H1 (cell line): ENCODE measurements at regions of chr4 and their contacts with region 1.

Region 1: DNA sequence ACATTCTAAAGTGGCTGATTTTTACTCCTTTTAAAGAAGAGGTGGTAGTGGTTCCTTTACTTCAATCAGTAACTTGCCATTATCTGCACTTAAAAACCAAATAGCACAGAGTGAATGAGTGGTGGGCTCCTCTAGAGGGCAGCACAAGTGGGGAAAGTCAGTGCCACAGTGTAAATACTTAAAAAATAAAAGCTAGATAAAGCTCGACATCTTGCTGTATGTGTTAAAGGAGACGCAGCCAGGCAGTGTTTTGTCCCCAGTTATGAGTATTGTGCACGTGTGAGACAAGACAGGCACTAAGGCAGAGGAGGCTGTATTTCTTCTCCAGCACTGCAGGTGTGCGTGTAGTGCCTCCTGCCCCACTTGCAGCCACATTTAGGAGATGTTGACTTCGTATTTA is 24.6 kb downstream of the NAP1L5 start:
- DNase-seq: peak; percentile 23 to 55
- H3K4me3 ChIP-seq: no peak overlapping the region
- H3K27ac ChIP-seq: no peak overlapping the region
- H3K4me1 ChIP-seq: no peaks in the 10 kb centered on the region
- H3K27me3 ChIP-seq: peaks cover 0 to 1% (median 0%) of the 10 kb centered on the region in 4 experiments; a peak in 1 of 7 replicates
- CTCF ChIP-seq: peak in 2 of 3 experiments; percentile 65 to 77; a peak in 3 of 4 replicates
- EP300 ChIP-seq: no peak
- POLR2A ChIP-seq: no peak
- RAD21 ChIP-seq: peak; percentile 57 to 73

Region 2: DNA sequence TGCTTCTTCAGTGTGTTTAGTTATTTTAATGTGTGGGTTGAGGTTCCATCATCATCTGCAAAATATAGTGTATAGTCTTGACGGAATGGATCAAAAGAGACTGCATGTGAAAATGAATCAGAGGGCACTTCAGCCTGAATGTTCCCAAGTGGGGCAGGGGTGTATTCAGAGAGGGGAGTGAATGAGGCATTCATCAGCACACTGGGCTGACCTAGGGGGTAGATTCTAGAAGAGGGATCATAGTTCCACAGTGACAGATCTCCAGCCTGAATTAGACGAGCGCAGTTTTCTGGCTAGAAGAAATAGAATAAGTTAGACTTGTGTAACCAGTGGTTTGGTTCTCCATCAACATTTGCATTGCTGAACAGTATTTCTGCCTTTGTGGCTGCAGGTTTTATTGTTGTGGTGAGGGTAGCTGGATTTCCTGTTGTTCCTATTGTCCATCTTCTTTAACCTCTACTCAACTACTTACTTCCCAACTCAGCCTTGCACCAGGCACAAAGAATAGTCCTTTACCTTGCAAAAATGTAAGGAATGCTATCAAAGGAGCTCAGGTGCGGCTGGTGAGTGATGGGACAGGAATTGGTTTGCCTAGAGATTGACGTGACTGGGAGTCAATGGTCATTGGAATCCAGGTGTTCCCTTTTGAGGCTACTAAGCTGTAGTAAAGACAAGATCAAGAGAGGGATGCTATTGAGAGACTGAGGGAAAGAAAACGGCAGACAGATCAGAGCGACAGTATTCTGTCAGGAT is 26.3 kb before region 1 on chr4:
- CTCF ChIA-PET with region 1: no interaction called
- POLR2A ChIA-PET with region 1: no interaction called
- DNase-seq: peak; percentile 51 to 57
- H3K4me3 ChIP-seq: no peak overlapping the region; a peak in 2 of 8 replicates
- H3K27ac ChIP-seq: no peak overlapping the region; the same call in 1 of the 2 replicates
- H3K4me1 ChIP-seq: peaks cover 7 to 11% (median 10%) of the 10 kb centered on the region in 4 experiments
- H3K27me3 ChIP-seq: no peaks in the 10 kb centered on the region
- CTCF ChIP-seq: no peak
- EP300 ChIP-seq: peak in 1 of 2 experiments; percentile 25; a peak in 1 of 3 replicates
- POLR2A ChIP-seq: no peak
- RAD21 ChIP-seq: no peak

Region 3: DNA sequence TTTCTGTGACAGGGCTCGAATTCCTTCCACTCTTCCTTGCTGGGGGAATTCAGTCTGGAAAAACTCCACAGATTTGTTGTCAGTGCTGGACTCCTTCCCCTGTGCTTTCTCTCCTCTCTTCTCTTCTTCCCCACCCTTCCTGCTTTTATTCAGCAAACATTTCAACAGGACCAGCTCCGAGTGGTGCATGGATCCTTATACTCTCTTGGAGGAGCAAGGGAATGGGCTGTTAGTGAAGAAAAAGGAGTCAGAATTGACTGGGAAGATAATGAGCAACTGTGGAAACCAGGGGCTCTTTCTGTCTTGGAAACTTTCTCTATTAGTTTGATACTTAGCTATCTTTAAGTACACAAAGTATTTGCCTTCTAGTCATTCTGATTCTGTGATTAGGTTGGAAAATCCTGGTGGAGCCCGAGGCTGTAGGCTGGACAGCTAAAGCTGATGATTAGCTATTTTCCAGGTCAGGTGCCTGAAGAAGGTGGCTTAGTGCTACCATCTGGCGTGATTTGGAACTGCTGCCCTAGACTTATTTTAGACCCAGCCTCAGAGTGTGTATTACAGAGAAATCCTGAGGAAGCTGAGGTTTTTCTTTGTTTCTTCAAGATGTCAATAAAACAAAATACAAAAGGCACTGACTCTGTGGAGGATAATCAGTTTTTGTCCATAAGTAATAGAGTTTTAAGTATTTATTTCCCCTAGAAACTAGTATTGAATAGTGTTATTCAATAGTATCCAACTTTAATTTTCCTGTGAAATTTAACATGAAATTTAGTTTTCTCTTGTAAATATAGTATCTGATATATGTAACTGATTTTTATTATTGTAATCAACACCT is 13.7 kb before region 1 on chr4:
- CTCF ChIA-PET with region 1: interaction called, 29 read pairs
- POLR2A ChIA-PET with region 1: no interaction called
- DNase-seq: no peak
- H3K4me3 ChIP-seq: no peak overlapping the region
- H3K27ac ChIP-seq: 0 out of 2 replicates have a peak overlapping the region, but pooled peaks have one; percentile 1
- H3K4me1 ChIP-seq: no peaks in the 10 kb centered on the region; a peak in 1 of 7 replicates
- H3K27me3 ChIP-seq: no peaks in the 10 kb centered on the region
- CTCF ChIP-seq: peak; percentile 38 to 85 (median 84)
- EP300 ChIP-seq: no peak
- POLR2A ChIP-seq: no peak
- RAD21 ChIP-seq: peak; percentile 91 to 95

Region 4: GRCh38 chr4:88690355-88690754 is 17.4 kb after region 1 on chr4:
- CTCF ChIA-PET with region 1: interaction called, 15 read pairs
- POLR2A ChIA-PET with region 1: no interaction called
- DNase-seq: no peak
- H3K4me3 ChIP-seq: no peak overlapping the region
- H3K27ac ChIP-seq: no peak overlapping the region
- H3K4me1 ChIP-seq: no peaks in the 10 kb centered on the region
- H3K27me3 ChIP-seq: no peaks in the 10 kb centered on the region
- CTCF ChIP-seq: no peak
- EP300 ChIP-seq: no peak
- POLR2A ChIP-seq: no peak
- RAD21 ChIP-seq: no peak